Right ventricle myocardium inferior (tissue), 1 donor: ENCODE measurements at regions of chr12 and their contacts with region 1.

Region 1: DNA sequence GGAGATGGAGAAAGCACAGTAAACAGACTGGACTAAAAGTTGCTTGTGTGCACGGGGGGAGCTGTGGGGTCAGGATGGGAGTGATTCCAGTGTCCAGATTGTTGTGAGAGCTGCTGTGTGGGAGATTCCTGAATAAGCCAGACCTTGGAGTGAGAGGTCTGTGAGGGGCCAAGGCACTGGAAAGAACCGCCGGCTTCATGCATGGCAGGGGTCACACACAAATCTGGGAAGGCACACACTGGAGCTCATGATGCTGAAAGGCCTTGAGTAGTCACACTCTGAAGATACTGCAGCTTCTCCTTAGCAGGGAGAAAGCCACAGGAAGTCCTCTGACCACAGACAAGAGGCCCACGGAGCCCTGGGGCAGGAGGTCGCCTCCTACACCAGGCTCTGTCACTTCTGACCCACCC is 23.1 kb downstream of the ADCY6 start:
- DNase-seq: no peak
- ATAC-seq: no peak

Region 2: DNA sequence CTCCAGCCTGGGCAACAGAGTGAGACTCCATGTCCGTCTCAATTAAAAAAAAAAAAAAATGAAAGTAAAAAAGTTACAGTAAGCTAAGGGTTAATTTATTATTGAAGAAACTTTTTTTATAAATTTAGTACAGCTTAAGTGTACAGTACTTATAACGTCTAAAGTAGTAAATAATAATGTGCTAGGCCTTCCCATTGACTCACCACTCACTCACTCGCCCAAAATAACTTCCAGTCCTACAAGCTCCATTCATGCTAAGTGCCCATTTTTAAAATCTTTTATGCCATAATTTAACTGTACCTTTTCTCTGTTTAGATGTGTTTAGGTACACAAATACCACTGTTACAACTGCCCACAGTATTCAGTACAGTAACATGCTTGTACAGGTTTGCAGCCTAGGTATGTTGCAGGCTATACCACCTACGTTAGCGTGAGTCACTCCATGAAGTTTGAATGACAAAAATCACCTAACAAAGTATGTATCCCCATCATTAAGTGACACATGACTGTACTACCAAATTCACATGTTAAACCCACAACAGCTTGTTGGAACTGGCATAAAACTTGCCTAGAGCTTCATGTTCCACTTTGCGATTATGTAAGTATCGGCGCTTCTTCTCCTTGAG is 94.4 kb before region 1 on chr12:
- intact Hi-C with region 1: no loop called
- DNase-seq: no peak
- ATAC-seq: no peak

Region 3: GRCh38 chr12:48787791-48788523 is 22.2 kb after region 1 on chr12:
- intact Hi-C with region 1: loop called (anchors 2 kb)
- DNase-seq: no peak
- ATAC-seq: peak; percentile 42

Region 4: DNA sequence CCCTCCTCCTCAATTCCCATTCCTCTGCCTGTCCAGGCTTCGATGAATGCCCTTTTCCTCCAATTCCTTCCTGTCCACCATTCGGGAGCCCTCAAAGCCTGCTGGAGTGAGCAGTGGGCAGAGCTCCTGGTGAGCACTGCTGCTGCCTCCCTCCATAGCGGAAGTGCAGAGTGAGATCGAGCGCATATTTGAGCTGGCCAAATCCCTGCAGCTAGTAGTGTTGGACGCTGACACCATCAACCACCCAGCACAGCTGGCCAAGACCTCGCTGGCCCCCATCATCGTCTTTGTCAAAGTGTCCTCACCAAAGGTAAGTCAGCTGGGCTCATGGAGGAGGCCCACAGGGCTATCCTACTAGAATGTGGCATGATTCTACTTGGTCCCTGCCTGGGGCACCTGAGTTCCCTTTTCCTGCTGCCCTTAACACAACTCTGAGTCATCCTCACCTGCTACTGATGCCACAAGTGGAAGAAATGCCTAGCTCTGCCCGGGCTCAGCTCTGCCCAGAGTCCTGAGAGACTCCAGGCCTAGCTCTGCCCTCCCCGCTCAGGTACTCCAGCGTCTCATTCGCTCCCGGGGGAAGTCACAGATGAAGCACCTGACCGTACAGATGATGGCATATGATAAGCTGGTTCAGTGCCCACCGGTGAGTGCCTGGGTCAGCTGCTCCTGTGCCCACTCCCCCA is 60.6 kb after region 1 on chr12:
- intact Hi-C with region 1: no loop called
- DNase-seq: no peak
- ATAC-seq: no peak